ENCODE measurements at regions of chr16 and their contacts with region 1.

Region 1: GRCh38 chr16:89565506-89566372 is 5.3 kb downstream of the RPL13 start:
- DNase-seq: peak in 2 of 5 donors; percentile 43 to 61
- ATAC-seq: peak; percentile 16 to 52 (median 46)
- H3K4me3 ChIP-seq: peak overlapping the region in 9 of 12 donors; percentile 14 to 41 (median 34)
- H3K27ac ChIP-seq: peak overlapping the region in 1 of 12 donors; percentile 15
- H3K4me1 ChIP-seq: peaks cover 8 to 53% (median 29%) of the 10 kb centered on the region in 12 donors
- H3K27me3 ChIP-seq: peaks cover 0 to 17% (median 7%) of the 10 kb centered on the region in 9 donors
- CTCF ChIP-seq: peak; percentile 1 to 64 (median 50)
- POLR2A ChIP-seq: peak in 1 of 2 donors; percentile 15

Region 2: GRCh38 chr16:89641458-89642119 is 75.8 kb after region 1 on chr16:
- intact Hi-C with region 1: loop called in 4 of 10 experiments (anchors 5 to 10 kb)
- DNase-seq: peak in 1 of 5 donors; percentile 62
- ATAC-seq: no peak
- H3K4me3 ChIP-seq: peak overlapping the region in 7 of 12 donors; percentile 40 to 62 (median 48)
- H3K27ac ChIP-seq: no peak overlapping the region
- H3K4me1 ChIP-seq: peaks cover 0 to 17% (median 7%) of the 10 kb centered on the region in 12 donors
- H3K27me3 ChIP-seq: no peaks in the 10 kb centered on the region
- CTCF ChIP-seq: peak in 1 of 12 donors; percentile 2
- POLR2A ChIP-seq: no peak

Region 3: GRCh38 chr16:89651584-89651983 is 85.8 kb after region 1 on chr16:
- intact Hi-C with region 1: loop called in 2 of 10 experiments (anchors 5 to 10 kb)
- DNase-seq: peak in 1 of 5 donors; percentile 17
- ATAC-seq: no peak
- H3K4me3 ChIP-seq: no peak overlapping the region
- H3K27ac ChIP-seq: no peak overlapping the region
- H3K4me1 ChIP-seq: peaks cover 2 to 5% (median 4%) of the 10 kb centered on the region in 12 donors
- H3K27me3 ChIP-seq: no peaks in the 10 kb centered on the region
- CTCF ChIP-seq: no peak
- POLR2A ChIP-seq: no peak

Measured in heart left ventricle (tissue), 16 donors.